Endothelial cell of umbilical vein (primary cell): ENCODE measurements at regions of chr20 and their contacts with region 1.

Region 1: GRCh38 chr20:4272225-4272624 is 256.9 kb upstream of the RNF24 start:
- DNase-seq: no peak
- H3K4me3 ChIP-seq: no peak overlapping the region
- H3K27ac ChIP-seq: no peak overlapping the region
- H3K4me1 ChIP-seq: no peaks in the 10 kb centered on the region
- H3K27me3 ChIP-seq: no peaks in the 10 kb centered on the region
- CTCF ChIP-seq: no peak
- POLR2A ChIP-seq: no peak

Region 2: GRCh38 chr20:4507288-4507719 is 235.1 kb after region 1 on chr20:
- CTCF ChIA-PET with region 1: no interaction called
- POLR2A ChIA-PET with region 1: no interaction called
- dilution Hi-C with region 1: no loop called
- intact Hi-C with region 1: no loop called
- DNase-seq: peak; percentile 96
- H3K4me3 ChIP-seq: no peak overlapping the region
- H3K27ac ChIP-seq: peak overlapping the region; percentile 96
- H3K4me1 ChIP-seq: peaks cover 37% of the 10 kb centered on the region
- H3K27me3 ChIP-seq: no peaks in the 10 kb centered on the region
- CTCF ChIP-seq: no peak
- POLR2A ChIP-seq: no peak

Region 3: DNA sequence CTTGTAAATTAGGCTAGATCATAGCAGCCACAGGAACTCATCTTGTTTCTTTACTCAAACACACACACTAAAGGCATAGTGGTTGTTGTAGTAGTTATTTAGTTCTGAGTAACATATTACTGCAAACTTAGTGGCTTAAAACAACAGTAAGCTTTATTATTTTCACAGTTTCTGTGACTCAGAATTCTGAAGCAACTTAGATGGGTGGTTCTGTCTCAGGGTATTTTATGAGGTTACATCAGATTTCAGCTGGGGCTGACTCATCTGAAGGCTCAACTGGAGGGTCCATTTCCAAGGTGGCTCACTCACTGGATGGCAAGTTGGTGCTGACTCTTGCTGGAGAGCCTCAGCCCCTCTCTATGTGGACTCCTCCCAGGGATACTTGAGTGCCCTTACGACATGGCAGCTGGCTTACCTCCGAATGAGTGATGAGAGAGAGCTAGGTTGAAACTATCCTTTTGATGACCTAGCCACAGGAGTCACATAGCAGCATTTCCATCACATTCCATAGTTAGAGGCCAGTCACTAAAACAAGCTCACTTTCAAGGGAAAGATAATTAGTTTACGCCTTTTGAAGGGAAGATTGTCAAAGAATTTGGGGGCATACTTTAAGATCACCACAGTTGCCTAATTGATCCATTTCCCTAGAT is 313.0 kb after region 1 on chr20:
- CTCF ChIA-PET with region 1: no interaction called
- POLR2A ChIA-PET with region 1: no interaction called
- dilution Hi-C with region 1: loop called (anchors 10 kb)
- intact Hi-C with region 1: no loop called
- DNase-seq: no peak
- H3K4me3 ChIP-seq: no peak overlapping the region
- H3K27ac ChIP-seq: no peak overlapping the region
- H3K4me1 ChIP-seq: no peaks in the 10 kb centered on the region
- H3K27me3 ChIP-seq: peaks cover 2 to 4% of the 10 kb centered on the region in 2 experiments
- CTCF ChIP-seq: no peak
- POLR2A ChIP-seq: no peak